ENCODE measurements at regions of chr5 and their contacts with region 1.

Region 1: DNA sequence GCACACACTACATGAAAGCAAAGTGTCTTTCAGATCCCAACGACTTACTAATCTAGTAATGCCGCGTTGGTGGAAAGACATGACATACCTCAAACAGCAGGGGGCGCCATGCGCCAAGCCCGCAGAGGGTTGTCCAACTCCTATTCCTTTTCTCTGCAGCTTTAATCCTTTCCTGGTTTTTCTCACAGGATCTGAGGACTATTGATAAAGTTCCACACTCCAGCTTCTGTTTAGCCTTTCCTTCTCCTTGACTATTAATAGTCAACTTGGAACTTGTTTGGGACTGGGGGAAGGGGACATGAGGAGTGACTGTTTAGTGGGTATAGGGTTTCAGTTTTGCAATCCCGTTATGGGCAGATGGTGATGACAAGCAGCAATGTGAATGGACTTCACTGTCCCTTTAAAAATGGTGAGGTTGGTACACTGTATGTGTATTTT is 62.9 kb downstream of the OTULIN start:
- DNase-seq: peak; percentile 53
- ATAC-seq: peak; percentile 65
- H3K4me3 Mint-ChIP-seq: no peak overlapping the region
- H3K27ac Mint-ChIP-seq: no peak overlapping the region
- H3K4me1 Mint-ChIP-seq: peaks cover 12% of the 10 kb centered on the region
- H3K27me3 Mint-ChIP-seq: no peaks in the 10 kb centered on the region
- CTCF ChIP-seq: peak; percentile 98

Region 2: GRCh38 chr5:14685757-14686156 is 41.7 kb before region 1 on chr5:
- CTCF ChIA-PET with region 1: interaction called, 5 read pairs
- POLR2A ChIA-PET with region 1: no interaction called
- intact Hi-C with region 1: loop called (anchors 5 kb)
- DNase-seq: peak; percentile 30
- ATAC-seq: peak; percentile 98
- H3K4me3 Mint-ChIP-seq: peak overlapping the region; percentile 44
- H3K27ac Mint-ChIP-seq: peak overlapping the region; percentile 67
- H3K4me1 Mint-ChIP-seq: peaks cover 15% of the 10 kb centered on the region
- H3K27me3 Mint-ChIP-seq: no peaks in the 10 kb centered on the region
- CTCF ChIP-seq: no peak

Region 3: GRCh38 chr5:14871210-14872069 is 144.0 kb after region 1 on chr5 and contains the start of gene ANKH:
- CTCF ChIA-PET with region 1: interaction called, 53 read pairs
- POLR2A ChIA-PET with region 1: interaction called, 9 read pairs
- intact Hi-C with region 1: loop called (anchors 1 kb)
- DNase-seq: peak; percentile 86
- ATAC-seq: peak; percentile 88
- H3K4me3 Mint-ChIP-seq: peak within 1 kb of the TSS; percentile 87
- H3K27ac Mint-ChIP-seq: peak within 1 kb of the TSS; percentile 80
- H3K4me1 Mint-ChIP-seq: peaks cover 22% of the 10 kb centered on the region
- H3K27me3 Mint-ChIP-seq: no peaks in the 10 kb centered on the region
- CTCF ChIP-seq: no peak
- total RNA-seq, gene ANKH: 43.3 and 43.7 TPM in 2 replicates

Region 4: GRCh38 chr5:14946815-14947640 is 219.6 kb after region 1 on chr5:
- CTCF ChIA-PET with region 1: interaction called, 6 read pairs
- POLR2A ChIA-PET with region 1: no interaction called
- intact Hi-C with region 1: loop called (anchors 1 kb)
- DNase-seq: no peak
- ATAC-seq: peak; percentile 72
- H3K4me3 Mint-ChIP-seq: no peak overlapping the region
- H3K27ac Mint-ChIP-seq: no peak overlapping the region
- H3K4me1 Mint-ChIP-seq: no peaks in the 10 kb centered on the region
- H3K27me3 Mint-ChIP-seq: peaks cover 14% of the 10 kb centered on the region
- CTCF ChIP-seq: no peak

Region 5: DNA sequence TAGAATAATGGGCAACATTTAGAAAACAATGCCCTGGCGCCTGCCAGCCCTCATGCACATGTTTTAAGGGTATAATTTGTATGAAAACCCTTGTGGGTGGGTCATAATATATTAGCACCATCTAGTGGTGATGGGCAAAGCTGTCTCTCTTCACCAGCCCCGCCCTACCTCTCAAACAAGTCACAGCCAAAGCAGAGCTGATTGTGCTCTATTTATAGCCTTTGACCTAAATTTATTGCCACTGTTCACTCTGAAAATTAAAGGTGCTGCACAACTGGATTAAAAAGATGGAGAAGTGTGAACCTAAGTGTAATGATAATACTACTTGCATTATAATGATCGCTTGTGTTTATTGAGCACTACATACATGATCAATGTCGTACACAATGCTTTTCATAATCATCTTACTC is 276.1 kb after region 1 on chr5:
- CTCF ChIA-PET with region 1: interaction called, 91 read pairs
- POLR2A ChIA-PET with region 1: no interaction called
- intact Hi-C with region 1: loop called (anchors 1 kb)
- DNase-seq: no peak
- ATAC-seq: peak; percentile 96
- H3K4me3 Mint-ChIP-seq: no peak overlapping the region
- H3K27ac Mint-ChIP-seq: no peak overlapping the region
- H3K4me1 Mint-ChIP-seq: peaks cover 18% of the 10 kb centered on the region
- H3K27me3 Mint-ChIP-seq: peaks cover 2% of the 10 kb centered on the region
- CTCF ChIP-seq: peak; percentile 36

Measured in activated B cell treated with CpG ODN at 0.5 μM for 24 hours (primary cell).